Mucosa of descending colon (tissue), 3 donors: ENCODE measurements at regions of chr1 and their contacts with region 1.

Region 1: GRCh38 chr1:42576935-42577334 is 81.3 kb upstream of the PPIH start:
- DNase-seq: no peak
- ATAC-seq: no peak
- H3K4me3 ChIP-seq: no peak overlapping the region
- H3K4me1 ChIP-seq: no peaks in the 10 kb centered on the region
- CTCF ChIP-seq: no peak

Region 2: DNA sequence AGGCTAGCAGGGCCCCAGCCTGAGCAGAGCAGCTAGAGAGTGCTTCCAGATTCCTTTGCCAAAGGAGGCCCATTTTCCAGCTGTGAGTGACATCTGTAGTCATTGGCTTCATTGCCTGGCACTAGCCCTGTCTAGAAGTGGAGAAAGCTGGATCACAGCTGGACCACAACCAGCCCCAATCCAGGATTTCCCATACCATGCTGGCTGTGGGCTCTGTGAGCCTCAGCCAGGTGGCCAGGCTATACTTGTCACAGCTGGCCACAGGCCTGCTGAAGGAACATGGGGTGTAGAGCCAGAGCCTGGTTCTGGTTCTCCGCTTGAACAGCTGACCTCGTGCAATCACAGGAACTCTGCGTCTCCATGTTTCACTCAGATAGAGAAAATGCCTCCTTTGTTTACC is 159.8 kb before region 1 on chr1:
- intact Hi-C with region 1: no loop called
- DNase-seq: no peak
- ATAC-seq: no peak
- H3K4me3 ChIP-seq: no peak overlapping the region
- H3K4me1 ChIP-seq: peaks cover 3% of the 10 kb centered on the region
- CTCF ChIP-seq: no peak

Region 3: GRCh38 chr1:42504535-42505128 is 72.3 kb before region 1 on chr1:
- intact Hi-C with region 1: no loop called
- DNase-seq: no peak
- ATAC-seq: no peak
- H3K4me3 ChIP-seq: no peak overlapping the region
- H3K4me1 ChIP-seq: no peaks in the 10 kb centered on the region
- CTCF ChIP-seq: no peak

Region 4: DNA sequence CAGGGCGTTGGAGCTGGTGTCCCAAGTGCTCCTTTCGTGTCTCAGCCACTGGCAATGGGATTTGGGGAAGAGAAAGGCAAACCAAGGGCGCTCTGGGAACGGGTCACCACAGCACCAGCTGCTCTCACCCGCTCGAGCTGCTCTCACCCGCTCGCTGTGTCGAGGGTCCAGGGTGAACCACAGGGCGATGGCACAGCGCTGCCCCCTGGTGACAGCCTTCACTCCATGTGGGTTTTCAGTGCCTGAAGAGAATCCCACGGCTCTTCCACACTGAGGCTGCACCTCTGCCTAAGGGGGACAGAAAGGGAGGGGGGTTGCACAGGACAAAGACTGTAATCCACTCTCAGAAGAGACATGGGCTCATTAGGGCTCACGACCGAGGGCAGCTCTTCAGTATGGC is 170.2 kb after region 1 on chr1:
- intact Hi-C with region 1: loop called (anchors 1 to 10 kb)
- DNase-seq: peak in 2 of 3 donors; percentile 64 to 69
- ATAC-seq: peak; percentile 65
- H3K4me3 ChIP-seq: no peak overlapping the region
- H3K4me1 ChIP-seq: no peaks in the 10 kb centered on the region
- CTCF ChIP-seq: peak; percentile 28